ENCODE measurements at regions of chr3 and their contacts with region 1.

Region 1: GRCh38 chr3:11716574-11717290 is 73.0 kb upstream of the VGLL4 start:
- DNase-seq: no peak
- ATAC-seq: no peak
- H3K4me3 ChIP-seq: no peak overlapping the region
- H3K27ac ChIP-seq: peak overlapping the region; percentile 90
- H3K4me1 ChIP-seq: peaks cover 20% of the 10 kb centered on the region
- H3K27me3 ChIP-seq: no peaks in the 10 kb centered on the region
- CTCF ChIP-seq: no peak

Region 2: DNA sequence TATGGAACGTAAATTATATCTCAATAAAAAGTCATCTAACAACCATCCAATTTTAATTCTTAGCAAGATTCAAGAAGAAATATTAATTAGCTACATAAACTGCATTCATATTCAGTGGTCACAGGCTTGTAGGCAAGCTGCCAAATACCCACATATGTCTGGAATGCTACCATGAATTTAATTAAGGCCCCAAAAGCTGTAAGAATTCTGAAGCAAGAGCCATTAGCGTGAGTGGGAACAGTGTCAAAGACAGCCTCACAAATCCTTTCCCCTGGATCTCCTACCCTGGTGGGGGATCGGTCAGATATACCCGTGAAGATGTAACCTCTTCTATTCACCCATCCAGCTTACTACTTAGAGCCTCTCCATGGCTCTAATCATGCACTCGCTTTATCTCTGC is 404.6 kb before region 1 on chr3:
- CTCF ChIA-PET with region 1: no interaction called
- POLR2A ChIA-PET with region 1: interaction called, 10 read pairs
- in situ Hi-C with region 1: no loop called
- intact Hi-C with region 1: no loop called
- DNase-seq: no peak
- ATAC-seq: no peak
- H3K4me3 ChIP-seq: no peak overlapping the region
- H3K27ac ChIP-seq: no peak overlapping the region
- H3K4me1 ChIP-seq: no peaks in the 10 kb centered on the region
- H3K27me3 ChIP-seq: no peaks in the 10 kb centered on the region
- CTCF ChIP-seq: no peak

Region 3: GRCh38 chr3:11335056-11335608 is 381.6 kb before region 1 on chr3:
- CTCF ChIA-PET with region 1: interaction called, 11 read pairs
- POLR2A ChIA-PET with region 1: no interaction called
- in situ Hi-C with region 1: no loop called
- intact Hi-C with region 1: no loop called
- DNase-seq: peak; percentile 39
- ATAC-seq: peak; percentile 80
- H3K4me3 ChIP-seq: no peak overlapping the region
- H3K27ac ChIP-seq: no peak overlapping the region
- H3K4me1 ChIP-seq: no peaks in the 10 kb centered on the region
- H3K27me3 ChIP-seq: no peaks in the 10 kb centered on the region
- CTCF ChIP-seq: peak; percentile 66